ENCODE measurements at regions of chr1 and their contacts with region 1.

Region 1: GRCh38 chr1:169779980-169780379 is 14.7 kb downstream of the METTL18 start:
- DNase-seq: peak; percentile 44 to 51
- H3K4me3 ChIP-seq: peak overlapping the region; percentile 43; the same call in 1 of the 2 replicates
- H3K27ac ChIP-seq: peak overlapping the region; percentile 95
- H3K4me1 ChIP-seq: peaks cover 57% of the 10 kb centered on the region
- H3K27me3 ChIP-seq: no peaks in the 10 kb centered on the region
- CTCF ChIP-seq: no peak

Region 2: GRCh38 chr1:169794530-169795416 is 14.8 kb after region 1 on chr1 and contains the start of gene METTL18:
- CTCF ChIA-PET with region 1: no interaction called
- POLR2A ChIA-PET with region 1: interaction called, 9 read pairs
- intact Hi-C with region 1: loop called (anchors 1 kb)
- DNase-seq: peak; percentile 90 to 91
- H3K4me3 ChIP-seq: peak within 1 kb of the TSS; percentile 85
- H3K27ac ChIP-seq: peak within 1 kb of the TSS; percentile 78
- H3K4me1 ChIP-seq: peaks cover 6% of the 10 kb centered on the region; the same call in 1 of the 2 replicates
- H3K27me3 ChIP-seq: no peaks in the 10 kb centered on the region
- CTCF ChIP-seq: no peak
- total RNA-seq, gene METTL18: 7.5 and 11.4 TPM in 2 replicates

Measured in PC-9 (cell line).